Right lobe of liver (tissue), 6 donors: ENCODE measurements at regions of chr16 and their contacts with region 1.

Region 1: DNA sequence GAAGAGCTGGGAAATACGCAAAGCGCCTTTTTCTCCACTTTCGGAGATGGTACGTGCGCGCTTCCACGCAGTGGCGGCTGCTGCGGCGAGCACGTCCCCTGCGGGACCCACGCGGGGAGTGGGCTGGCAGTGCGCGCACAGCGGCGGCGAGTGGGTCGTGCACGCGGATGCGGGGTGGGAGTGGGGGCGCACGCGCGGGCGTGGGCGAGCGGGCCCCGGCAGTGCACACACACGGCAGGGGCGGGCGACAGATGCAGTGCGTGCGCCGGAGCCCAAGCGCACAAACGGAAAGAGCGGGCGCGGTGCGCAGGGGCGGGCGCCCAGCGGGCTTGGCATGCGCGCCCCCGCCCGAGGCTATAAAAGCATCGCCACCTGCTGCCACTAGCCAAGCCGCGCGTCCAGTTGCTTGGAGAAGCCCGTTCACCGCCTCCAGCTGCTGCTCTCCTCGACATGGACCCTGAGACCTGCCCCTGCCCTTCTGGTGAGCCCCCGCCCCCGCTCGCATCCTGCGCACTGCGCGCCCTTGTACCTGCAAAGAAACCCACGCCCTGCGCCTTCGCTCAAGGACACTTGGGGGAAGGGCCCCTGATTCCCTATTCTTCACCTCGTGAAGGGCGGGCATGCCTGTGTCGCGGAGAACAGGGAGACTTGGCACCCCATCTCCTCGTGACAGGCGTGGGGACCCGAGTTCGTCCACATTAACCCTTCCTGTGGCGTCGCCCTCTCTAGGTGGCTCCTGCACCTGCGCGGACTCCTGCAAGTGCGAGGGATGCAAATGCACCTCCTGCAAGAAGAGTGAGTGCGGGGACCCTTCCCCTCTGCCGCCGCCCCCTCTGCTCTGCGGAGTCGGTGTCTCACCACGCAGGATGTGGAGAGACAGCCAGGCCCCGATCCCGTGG is at the start of gene MT3:
- DNase-seq: no peak
- ATAC-seq: peak; percentile 17 to 38 (median 32)
- H3K4me3 ChIP-seq: peak within 1 kb of the TSS; percentile 18 to 40 (median 20)
- H3K27ac ChIP-seq: no peak within 1 kb of the TSS
- H3K4me1 ChIP-seq: peaks cover 0 to 9% (median 0%) of the 10 kb centered on the region in 4 donors
- H3K27me3 ChIP-seq: no peaks in the 10 kb centered on the region
- CTCF ChIP-seq: no peak
- POLR2A ChIP-seq: no peak
- total RNA-seq, gene MT3: 0.62 TPM in 1 of 6 experiments, not detected in the others

Region 2: GRCh38 chr16:56519459-56520250 is 69.7 kb before region 1 on chr16 and contains the start of gene BBS2:
- intact Hi-C with region 1: loop called in 1 of 2 experiments (anchors 10 kb)
- DNase-seq: peak; percentile 91 to 93 (median 93)
- ATAC-seq: peak; percentile 97 to 98 (median 98)
- H3K4me3 ChIP-seq: peak within 1 kb of the TSS; percentile 91 to 99 (median 96)
- H3K27ac ChIP-seq: peak within 1 kb of the TSS; percentile 71 to 83 (median 79)
- H3K4me1 ChIP-seq: peaks cover 0 to 11% (median 2%) of the 10 kb centered on the region in 4 donors
- H3K27me3 ChIP-seq: no peaks in the 10 kb centered on the region
- CTCF ChIP-seq: peak in 1 of 4 donors; percentile 22
- POLR2A ChIP-seq: peak; percentile 84
- total RNA-seq, gene BBS2: 5.6 to 18.4 (median 10.5) TPM

Region 3: DNA sequence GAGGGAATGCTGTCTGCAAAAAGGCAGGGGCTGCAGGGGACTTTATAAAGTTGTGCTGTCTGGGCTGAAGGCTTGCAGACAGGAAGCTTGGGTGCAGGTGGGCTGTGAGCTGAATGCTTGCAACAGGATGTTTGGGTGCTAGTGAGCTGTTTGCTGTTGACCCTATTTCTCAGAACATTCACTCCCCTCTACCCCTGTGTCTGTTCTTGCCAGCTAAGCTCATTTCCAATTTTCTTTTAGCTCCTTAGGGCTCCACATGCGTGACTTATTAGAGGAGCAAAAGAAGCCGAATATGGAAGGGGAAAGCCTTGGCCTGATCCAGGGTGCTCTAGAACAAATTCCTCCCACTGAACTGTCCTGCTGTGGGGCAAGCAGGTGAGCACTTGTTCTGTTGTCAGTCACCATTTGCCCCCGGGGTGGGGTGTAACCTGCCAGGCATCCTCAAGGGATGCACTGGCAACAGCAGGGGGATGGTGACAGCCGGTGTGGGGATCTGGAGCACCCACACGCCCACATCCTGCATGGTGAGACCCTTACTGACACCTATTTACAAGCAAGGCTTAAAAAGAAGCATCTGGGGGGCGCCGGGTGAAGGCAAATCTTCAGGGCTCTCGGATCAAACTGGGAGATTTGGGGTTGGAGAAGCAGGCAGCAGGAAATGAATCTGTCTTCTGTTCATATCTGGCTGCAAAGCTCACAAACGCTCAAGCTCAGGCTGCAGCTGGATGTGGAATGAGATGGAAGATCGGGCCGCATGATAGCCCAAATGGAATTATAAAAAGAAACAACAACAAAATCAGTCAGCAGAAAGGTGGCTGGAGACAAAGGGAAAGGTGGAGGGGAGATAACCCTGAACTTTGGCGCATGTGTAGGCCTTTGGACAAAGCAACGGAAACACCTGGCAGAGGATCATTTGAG is 119.4 kb after region 1 on chr16:
- intact Hi-C with region 1: no loop called
- DNase-seq: no peak
- ATAC-seq: no peak
- H3K4me3 ChIP-seq: no peak overlapping the region
- H3K27ac ChIP-seq: no peak overlapping the region
- H3K4me1 ChIP-seq: no peaks in the 10 kb centered on the region
- H3K27me3 ChIP-seq: no peaks in the 10 kb centered on the region
- CTCF ChIP-seq: no peak
- POLR2A ChIP-seq: no peak

Region 4: GRCh38 chr16:57060323-57061083 is 471.1 kb after region 1 on chr16:
- intact Hi-C with region 1: no loop called
- DNase-seq: no peak
- ATAC-seq: peak; percentile 2 to 9 (median 5)
- H3K4me3 ChIP-seq: no peak overlapping the region
- H3K27ac ChIP-seq: peak overlapping the region; percentile 2 to 91 (median 76)
- H3K4me1 ChIP-seq: peaks cover 0 to 24% (median 9%) of the 10 kb centered on the region in 4 donors
- H3K27me3 ChIP-seq: no peaks in the 10 kb centered on the region
- CTCF ChIP-seq: no peak
- POLR2A ChIP-seq: no peak